Activated CD4-positive, alpha-beta memory T cell treated with anti-CD3 and anti-CD28 coated beads for 36 hours (primary cell): ENCODE measurements at regions of chr2 and their contacts with region 1.

Region 1: GRCh38 chr2:38315707-38316333 is 61.3 kb downstream of the ATL2 start:
- DNase-seq: no peak
- H3K4me3 Mint-ChIP-seq: no peak overlapping the region
- H3K27ac Mint-ChIP-seq: no peak overlapping the region
- H3K4me1 Mint-ChIP-seq: peaks cover 13% of the 10 kb centered on the region
- H3K27me3 Mint-ChIP-seq: no peaks in the 10 kb centered on the region

Region 2: GRCh38 chr2:38465789-38466127 is 149.9 kb after region 1 on chr2:
- CTCF ChIA-PET with region 1: interaction called, 9 read pairs
- POLR2A ChIA-PET with region 1: no interaction called
- intact Hi-C with region 1: loop called (anchors 1 kb)
- DNase-seq: peak; percentile 23
- H3K4me3 Mint-ChIP-seq: no peak overlapping the region
- H3K27ac Mint-ChIP-seq: no peak overlapping the region
- H3K4me1 Mint-ChIP-seq: peaks cover 9% of the 10 kb centered on the region
- H3K27me3 Mint-ChIP-seq: peaks cover 6% of the 10 kb centered on the region

Region 3: DNA sequence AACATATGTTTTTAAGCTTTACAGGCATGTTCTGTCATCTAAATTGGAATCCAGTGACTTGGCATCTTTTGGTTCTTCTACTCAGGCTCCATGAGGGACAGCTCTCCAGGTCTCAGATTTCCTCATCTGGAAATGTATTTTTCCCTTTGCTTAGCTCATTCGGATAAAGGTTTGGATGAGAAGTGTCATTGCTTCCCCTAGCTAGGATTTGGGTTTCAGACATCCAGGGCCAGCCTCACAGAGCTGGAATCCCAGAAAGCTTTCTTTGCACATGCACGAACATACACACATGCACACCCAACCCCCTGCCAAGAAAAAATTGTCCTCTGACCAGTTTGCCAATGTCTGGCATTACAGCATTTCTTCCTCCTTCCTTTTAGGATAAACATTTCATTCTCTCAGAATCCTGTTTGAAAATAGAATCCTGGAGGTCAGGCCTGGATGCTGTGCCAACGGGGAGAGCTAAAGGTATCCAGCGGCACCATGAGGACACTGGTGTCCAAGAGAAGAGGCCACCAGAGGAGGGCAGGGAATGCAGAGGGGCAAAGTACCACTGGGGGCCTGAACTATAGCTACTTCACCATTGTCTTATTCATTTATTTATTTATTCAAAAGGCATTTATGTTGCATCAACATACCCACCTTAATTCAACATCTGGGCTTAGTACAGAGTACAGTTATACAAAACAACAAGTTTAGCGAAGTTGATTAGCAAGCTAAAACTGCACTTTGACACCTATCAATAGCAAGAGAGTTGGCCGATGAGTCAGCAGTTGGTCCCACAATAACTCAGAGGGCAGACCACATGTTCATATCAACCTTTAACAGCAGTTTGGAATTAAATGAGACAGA is 159.1 kb after region 1 on chr2:
- CTCF ChIA-PET with region 1: interaction called, 12 read pairs
- POLR2A ChIA-PET with region 1: interaction called, 4 read pairs
- intact Hi-C with region 1: no loop called
- DNase-seq: peak; percentile 73
- H3K4me3 Mint-ChIP-seq: no peak overlapping the region
- H3K27ac Mint-ChIP-seq: no peak overlapping the region
- H3K4me1 Mint-ChIP-seq: peaks cover 31% of the 10 kb centered on the region
- H3K27me3 Mint-ChIP-seq: peaks cover 14% of the 10 kb centered on the region